ENCODE measurements at regions of chr3 and their contacts with region 1.

Region 1: GRCh38 chr3:190321789-190322603 is at the start of gene CLDN1:
- DNase-seq: peak; percentile 77 to 96
- H3K4me3 ChIP-seq: peak within 1 kb of the TSS; percentile 51
- CTCF ChIP-seq: no peak
- POLR2A ChIP-seq: no peak
- total RNA-seq, gene CLDN1: 452 to 1,148 (median 544) TPM

Region 2: DNA sequence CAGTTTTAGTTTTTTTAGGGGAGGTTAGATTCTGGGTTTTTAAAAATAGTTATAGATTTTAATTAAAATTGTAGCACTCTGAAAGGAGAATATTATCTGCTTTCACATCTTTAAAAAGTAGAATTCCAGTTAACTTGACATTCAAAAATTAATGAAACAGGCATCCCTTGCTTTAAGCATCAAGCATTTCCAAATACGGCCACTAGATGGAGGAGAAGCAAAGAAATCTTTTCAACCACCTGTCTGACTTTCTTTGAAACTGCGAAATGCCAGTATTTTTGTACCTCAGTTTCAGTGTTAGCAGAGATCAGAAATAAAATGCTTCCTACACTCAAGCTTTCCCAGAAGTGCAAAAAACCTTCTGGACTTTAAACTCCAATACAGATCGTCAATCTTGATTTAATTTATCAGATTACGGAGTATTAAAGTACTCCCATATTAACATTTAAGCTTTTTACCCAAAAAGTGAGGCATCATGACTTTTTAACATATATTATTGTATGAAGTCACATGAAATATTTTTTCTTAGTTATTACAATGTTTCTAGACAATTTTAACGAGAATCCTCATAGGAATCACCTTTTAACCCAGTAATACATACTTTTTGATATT is 354.6 kb before region 1 on chr3:
- intact Hi-C with region 1: loop called (anchors 5 kb)
- DNase-seq: no peak
- H3K4me3 ChIP-seq: no peak overlapping the region
- CTCF ChIP-seq: no peak
- POLR2A ChIP-seq: no peak

Region 3: GRCh38 chr3:190224863-190225692 is 96.9 kb before region 1 on chr3:
- intact Hi-C with region 1: loop called (anchors 10 kb)
- DNase-seq: no peak
- H3K4me3 ChIP-seq: no peak overlapping the region
- CTCF ChIP-seq: no peak
- POLR2A ChIP-seq: no peak

Measured in lower leg skin (tissue), 4 donors.